Posterior cingulate gyrus (tissue), 11 donors: ENCODE measurements at regions of chr7 and their contacts with region 1.

Region 1: DNA sequence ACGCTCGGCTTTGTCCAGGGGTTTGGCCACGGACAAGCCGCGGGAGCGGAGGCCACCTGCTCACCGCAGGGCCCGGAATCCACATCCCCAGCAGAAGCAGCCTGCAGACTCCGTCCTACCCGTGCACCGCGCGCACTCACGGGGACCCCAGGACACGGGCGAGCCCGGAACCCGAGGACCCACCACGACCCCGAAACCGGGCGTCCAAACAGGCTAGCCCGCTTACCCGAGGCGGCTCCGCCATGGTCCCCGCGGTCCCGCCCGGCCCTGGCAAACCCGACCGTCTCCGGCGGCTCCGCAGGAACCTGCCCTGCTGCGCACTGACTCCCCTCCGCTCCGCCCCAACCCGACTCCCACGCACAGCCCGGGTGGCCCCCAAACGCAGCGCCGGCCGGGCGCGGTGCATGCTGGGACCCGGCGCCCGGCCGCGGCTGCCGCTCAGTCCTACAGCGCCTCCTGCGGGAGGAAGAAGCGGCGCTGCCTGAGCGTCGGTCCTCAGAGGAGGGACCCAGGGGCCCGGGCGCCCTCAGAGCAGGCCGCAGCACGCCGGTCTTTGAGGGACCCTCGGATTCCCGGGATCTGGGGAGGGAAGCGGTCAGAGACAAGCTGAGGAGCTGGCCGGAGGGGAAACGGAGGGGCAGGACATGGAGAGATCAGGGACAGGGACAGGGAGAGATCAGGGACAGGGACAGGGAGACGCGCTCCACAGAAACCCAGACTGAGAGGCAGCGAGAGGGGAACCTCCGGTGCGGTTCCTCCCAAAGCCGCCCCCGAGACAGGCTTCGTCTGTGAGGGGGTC is at the start of gene ZNF786:
- DNase-seq: peak; percentile 75 to 97 (median 82)

Region 2: DNA sequence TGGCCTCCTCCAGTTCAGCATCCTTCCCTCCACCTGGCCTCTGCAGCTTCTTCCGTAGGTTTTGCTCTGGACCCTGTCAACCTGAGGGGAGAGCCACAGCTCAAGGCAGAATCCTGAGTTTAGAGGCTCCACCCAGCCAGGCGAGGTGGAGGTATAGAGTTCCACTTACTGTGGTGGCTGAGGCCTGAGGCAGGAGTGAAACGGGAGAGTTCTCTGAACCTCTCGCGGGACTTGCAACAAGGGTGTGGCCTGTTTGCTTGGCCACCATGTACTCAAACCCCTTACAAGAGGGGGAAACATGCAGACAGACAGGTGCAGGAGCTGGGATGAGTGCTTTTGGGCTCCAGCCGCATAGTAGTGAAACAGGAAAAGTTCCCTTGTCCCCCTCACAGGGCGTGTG is 654.0 kb before region 1 on chr7:
- intact Hi-C with region 1: no loop called
- DNase-seq: no peak

Region 3: DNA sequence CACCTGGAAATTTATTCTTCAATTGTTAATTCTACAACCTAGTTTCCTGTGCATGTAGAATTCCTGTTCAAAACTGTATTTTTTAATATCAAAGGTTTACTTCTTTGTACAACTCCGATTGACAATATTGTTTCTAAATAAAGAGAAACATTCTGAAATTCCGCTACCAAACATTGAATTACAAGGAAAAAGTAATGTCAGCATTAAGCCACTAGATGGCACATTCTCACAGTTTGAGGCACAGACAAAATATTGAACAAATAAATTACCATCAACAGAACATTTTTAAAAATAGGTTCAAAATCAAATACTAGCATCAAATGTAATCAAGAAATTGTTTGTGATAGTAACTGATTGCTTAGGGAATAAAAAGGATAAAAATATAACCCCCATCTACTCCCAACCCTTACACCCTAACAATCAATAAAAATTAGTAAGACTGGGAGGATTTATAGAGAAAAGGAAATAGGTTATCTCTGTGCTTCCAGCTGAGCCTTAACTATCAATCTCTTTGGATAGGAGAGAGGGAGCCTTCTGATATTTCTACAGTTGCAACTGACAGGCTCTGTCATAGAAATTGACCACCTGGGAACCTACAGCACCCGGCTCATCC is 586.6 kb before region 1 on chr7:
- intact Hi-C with region 1: loop called (anchors 10 kb)
- DNase-seq: no peak

Region 4: DNA sequence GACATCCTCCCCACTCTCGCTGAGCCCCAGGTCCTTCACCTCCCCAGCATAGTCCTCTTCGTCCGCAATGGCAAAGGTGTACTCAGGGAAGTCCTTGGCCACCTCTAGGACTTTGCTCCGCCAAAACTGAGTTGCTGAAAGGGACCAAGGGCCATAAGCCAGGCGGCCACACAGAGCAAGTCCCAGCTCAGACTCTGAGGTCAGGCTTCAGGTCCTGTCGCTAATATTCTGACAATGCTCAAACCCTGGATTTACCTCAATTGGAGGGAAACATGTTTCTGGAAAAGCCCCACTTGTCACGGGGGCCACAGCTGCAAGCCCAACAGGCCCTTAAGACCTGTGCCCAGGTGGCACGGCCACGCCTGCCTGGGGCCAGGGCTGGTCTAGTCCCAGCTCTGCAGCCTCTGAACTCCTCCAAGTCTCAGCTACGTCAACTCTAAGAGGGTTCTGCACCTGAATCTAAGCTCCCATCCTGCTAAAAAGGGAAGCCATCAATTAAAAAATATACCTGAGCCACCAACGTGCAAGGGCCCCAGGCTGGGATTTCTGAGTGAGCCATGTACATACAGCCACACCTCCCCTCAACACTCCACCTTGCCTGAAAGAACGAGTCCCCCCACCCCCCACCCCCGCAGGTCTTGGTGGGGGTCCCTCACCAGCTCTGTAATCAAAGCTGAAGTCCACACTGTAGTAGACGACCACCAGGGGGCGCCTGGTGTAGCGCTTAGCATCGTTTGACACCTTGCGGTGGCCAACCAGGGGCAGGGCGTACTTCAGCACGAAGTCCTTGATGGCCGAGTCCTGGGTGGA is 85.2 kb before region 1 on chr7:
- intact Hi-C with region 1: loop called (anchors 1 kb)
- DNase-seq: peak; percentile 29 to 96 (median 76)

Region 5: DNA sequence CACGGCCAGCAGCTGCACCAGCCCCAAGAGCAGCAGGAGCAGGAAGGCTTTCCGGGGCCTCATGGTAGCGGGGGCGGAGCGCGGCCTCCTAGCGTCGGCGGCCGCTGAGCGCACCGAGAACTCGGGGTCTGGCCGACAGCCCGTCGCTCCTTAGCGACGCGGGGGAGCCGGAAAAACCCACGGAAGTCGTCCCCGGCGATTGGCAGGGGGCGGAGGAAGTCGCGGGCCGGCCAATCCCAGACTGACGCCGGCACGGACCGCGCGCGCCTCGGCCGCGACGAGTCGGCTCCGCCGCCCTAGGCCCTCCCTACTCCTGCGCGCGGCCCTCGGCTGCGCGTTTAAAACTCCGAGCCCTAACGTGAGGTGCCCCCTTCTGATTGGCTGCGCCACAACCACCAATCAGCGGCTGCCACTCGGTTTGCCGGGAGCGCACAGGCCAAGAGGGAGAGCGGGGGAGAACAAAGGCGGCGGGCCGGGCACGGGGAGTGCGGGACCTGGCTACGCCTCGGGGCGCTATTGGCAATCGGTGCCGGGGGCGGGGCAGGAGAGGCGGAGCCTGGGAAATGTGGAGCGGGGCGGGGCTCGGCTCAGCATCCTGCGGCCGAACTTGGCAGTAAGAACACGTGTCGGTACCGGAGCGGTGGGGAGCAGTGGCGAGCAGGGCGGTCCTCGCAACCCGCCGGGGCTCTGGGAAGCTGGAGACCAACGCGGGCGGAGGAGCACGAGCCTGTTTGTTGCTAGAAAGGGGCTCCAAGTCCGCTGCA is 62.1 kb before region 1 on chr7 and contains the start of gene PDIA4:
- intact Hi-C with region 1: loop called (anchors 1 kb)
- DNase-seq: peak; percentile 99 to 100 (median 100)

Region 6: DNA sequence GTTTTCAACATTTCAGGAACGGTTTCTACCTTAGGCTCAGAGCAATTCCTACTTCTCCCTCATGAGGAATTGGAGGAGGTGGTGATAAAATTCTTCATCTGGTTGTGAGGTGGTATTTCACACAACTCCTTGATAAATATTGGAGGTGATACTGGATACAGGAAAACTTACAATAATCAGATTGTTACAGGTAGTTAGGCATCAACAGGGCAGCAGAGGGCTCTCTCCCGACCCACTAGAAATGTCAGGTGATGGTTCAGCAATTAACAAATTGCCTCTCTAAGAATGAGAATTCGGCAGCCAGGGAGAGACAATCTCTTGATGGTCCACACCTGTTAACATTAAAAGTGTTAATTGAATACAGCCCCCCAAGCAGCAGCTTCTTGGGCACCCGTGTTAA is 22.7 kb before region 1 on chr7:
- intact Hi-C with region 1: loop called (anchors 1 kb)
- DNase-seq: no peak

Region 7: GRCh38 chr7:149125863-149126661 is 35.5 kb after region 1 on chr7 and contains the start of gene ZNF425:
- intact Hi-C with region 1: loop called (anchors 2 kb)
- DNase-seq: peak; percentile 83 to 98 (median 88)

Region 8: DNA sequence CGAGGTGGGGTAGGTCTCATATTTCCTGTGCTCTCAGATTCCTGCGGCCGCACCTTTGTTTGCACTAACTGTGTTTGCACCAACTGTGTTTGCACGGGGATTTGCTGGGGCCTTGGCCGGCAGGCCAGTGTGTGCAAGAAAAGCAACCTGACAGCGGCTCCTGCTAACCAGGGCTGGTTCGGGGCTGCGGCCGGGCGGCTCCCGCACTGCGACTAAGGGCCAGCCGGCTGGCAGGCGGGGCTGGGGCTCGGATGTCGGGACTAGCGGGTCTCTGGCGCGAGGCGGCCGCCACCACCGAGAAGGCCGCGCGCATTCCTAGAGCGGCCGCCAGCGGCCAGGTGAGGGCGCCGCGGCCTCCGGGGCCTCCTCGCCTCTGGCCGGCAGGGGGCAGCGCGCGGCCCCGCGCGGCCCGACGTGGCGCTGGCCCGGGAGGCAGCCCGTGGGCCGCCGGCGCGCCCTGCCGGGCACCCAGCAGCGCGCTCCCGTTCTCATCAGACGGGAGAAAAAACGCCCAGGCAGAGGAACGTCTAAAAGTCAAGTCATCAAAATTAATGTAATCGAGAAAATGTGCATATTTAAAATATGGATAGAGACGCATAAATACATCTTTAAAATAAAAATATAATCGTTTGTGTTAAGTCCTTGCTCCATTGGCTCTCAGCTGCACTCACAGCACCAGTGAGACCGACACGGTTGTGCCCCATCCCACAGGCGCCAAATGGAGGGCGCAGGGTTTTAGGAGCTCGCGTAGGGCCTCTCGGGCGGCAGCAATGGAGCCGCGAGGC is 331.7 kb after region 1 on chr7:
- intact Hi-C with region 1: no loop called
- DNase-seq: peak in 3 of 10 donors; percentile 61 to 91 (median 79)

Region 9: GRCh38 chr7:149624419-149625339 is 534.1 kb after region 1 on chr7:
- intact Hi-C with region 1: no loop called
- DNase-seq: peak; percentile 82 to 99 (median 92)